ENCODE measurements at regions of chr18 and their contacts with region 1.

Region 1: DNA sequence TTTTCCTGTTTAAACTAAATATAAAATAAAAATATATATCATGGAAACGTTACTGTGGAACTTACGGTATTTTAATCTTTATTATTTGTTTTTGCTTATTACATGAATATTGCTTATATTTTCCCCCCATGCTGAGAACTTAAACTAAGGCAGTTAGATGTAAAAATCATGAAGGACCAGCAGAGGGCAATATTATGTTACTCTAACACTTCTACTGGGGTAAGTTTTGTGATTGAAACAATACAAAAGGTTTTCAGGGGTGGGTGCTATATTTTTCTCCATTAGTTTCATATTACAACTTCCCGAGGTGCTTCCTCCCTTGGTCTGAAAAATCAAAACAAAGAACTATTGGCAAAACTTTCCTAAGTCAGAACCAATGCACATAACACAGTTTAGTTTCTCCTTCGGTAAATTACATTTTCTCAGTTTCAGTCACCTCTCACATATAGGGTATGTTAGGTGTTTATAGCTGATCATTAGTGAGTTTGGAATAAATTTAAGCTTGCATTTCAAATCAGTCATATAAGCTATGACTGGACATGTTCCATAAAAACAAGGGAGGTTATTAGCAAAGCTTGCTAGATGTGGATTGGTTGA is 54.8 kb downstream of the ZNF407 start:
- DNase-seq: no peak
- ATAC-seq: peak; percentile 36

Region 2: DNA sequence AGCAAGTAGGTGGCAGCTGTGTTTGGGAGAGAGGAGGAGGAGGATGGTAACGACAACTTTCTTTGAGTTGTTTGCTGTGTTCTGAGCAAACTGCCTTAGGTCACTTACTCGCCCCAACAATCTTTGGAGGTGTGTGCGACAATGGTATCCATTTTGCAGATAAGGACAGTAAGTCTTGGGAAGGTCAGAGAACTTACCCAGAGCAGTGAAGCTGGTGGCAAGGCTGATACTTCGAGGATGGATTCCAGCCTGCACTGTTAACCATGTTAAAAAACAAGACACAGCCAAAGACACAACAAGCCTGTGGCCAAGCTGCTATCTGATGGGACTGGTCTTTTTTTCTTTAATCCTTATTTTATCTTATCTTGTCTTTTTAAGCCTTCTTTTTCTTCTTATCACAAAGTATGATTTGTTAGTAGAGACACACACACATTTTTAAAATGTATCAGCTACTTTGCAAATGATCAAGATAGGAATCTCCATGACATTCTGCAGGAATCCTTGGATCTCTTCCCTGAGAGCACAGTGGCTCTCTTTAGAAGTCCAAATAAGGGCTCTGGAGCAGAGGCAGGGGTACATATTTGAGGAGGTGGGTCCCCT is 90.3 kb before region 1 on chr18:
- intact Hi-C with region 1: no loop called
- DNase-seq: no peak
- ATAC-seq: no peak

Region 3: GRCh38 chr18:75041586-75041985 is 389.1 kb after region 1 on chr18:
- intact Hi-C with region 1: loop called in 1 of 2 experiments (anchors 10 kb)
- DNase-seq: no peak
- ATAC-seq: peak; percentile 63

Region 4: GRCh38 chr18:75482880-75483279 is 830.4 kb after region 1 on chr18:
- intact Hi-C with region 1: loop called in 1 of 2 experiments (anchors 5 kb)
- DNase-seq: no peak
- ATAC-seq: no peak

Region 5: DNA sequence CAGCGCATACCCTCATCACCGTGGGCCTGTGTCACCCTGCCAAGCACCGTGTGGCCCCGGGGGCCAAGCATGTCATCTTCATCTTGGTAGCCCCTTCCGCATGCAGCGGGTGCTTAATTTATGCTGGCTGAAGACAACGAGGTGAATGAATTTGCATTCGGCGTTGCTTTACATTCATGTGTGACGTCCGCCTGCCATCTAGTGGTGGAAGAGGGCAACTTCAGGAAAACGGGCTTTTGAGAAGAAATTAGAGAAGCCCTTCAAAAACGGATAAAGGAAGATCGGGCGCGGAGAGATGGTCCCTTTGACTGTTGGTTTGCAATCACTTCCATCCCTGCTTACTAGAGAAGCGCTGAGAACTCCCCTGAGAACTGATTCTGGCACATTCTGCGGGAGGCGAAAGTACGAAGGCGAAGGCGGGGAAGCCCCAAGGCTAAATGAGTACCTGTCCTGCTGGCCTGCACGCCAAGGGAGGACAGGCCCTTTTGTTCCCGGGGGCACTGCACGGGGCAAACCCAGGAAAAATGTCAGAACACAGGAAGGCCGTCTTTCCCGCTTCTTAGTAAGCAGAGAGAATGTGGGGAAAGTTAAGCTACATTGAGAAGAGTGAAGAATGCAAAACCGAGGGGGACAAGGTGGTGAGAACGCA is 1696.7 kb after region 1 on chr18:
- intact Hi-C with region 1: loop called in 1 of 2 experiments (anchors 10 kb)
- DNase-seq: peak in 1 of 2 donors; percentile 67
- ATAC-seq: peak; percentile 65